ENCODE measurements at regions of chr11 and their contacts with region 1.

Region 1: GRCh38 chr11:34585735-34586487 is 35.0 kb upstream of the EHF start:
- DNase-seq: no peak

Region 2: DNA sequence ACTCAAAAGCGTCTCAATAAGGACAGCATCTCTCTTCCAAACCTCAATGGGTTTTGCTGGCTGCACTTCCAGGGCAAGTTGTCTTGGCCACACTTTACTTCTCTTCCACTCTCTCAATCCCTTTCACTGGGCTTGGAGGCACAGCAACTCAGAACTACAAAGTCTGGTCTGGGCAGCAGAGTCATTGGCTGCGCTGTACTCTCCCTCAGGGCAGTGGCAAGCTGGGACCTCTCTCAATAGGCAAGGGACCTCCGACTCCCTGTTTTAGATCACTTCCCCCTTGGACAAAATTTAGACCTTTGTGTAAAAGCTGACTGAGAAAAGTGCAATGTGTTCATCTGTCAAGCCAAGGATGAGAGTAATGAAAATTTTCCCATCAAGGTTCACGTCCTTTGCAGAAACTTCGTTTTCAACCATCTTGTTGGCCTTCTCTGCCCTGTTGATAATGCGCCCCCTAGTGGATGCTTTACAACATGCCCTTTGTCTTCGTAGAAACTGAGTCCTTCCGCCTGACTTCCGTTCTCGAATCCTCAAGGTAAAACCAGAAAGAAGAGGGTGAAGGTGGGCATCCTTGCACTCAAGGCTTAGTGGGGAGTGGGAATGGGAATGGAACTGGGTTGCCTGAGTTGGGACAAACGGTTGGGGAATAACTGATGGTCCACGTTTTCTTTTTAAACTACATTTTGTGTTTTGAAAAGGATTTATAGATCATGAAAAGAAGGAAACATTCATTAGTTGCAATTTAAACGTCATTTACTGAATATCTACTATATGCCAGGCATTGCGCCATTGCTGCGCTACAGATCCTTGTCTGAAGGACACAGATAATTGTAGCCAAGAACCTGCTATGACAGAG is 652.2 kb after region 1 on chr11:
- intact Hi-C with region 1: loop called (anchors 10 kb)
- DNase-seq: peak in 3 of 10 donors; percentile 22 to 53 (median 25)

Region 3: GRCh38 chr11:35391922-35392813 is 806.3 kb after region 1 on chr11:
- intact Hi-C with region 1: loop called (anchors 5 kb)
- DNase-seq: peak; percentile 59 to 97 (median 83)